ENCODE measurements at regions of chr9 and their contacts with region 1.

Region 1: GRCh38 chr9:136728080-136728547 is 14.6 kb downstream of the LCN10 start:
- DNase-seq: peak; percentile 89
- H3K4me3 Mint-ChIP-seq: peak overlapping the region; percentile 57
- H3K27ac Mint-ChIP-seq: no peak overlapping the region
- H3K4me1 Mint-ChIP-seq: peaks cover 25% of the 10 kb centered on the region
- H3K27me3 Mint-ChIP-seq: peaks cover 4% of the 10 kb centered on the region

Region 2: DNA sequence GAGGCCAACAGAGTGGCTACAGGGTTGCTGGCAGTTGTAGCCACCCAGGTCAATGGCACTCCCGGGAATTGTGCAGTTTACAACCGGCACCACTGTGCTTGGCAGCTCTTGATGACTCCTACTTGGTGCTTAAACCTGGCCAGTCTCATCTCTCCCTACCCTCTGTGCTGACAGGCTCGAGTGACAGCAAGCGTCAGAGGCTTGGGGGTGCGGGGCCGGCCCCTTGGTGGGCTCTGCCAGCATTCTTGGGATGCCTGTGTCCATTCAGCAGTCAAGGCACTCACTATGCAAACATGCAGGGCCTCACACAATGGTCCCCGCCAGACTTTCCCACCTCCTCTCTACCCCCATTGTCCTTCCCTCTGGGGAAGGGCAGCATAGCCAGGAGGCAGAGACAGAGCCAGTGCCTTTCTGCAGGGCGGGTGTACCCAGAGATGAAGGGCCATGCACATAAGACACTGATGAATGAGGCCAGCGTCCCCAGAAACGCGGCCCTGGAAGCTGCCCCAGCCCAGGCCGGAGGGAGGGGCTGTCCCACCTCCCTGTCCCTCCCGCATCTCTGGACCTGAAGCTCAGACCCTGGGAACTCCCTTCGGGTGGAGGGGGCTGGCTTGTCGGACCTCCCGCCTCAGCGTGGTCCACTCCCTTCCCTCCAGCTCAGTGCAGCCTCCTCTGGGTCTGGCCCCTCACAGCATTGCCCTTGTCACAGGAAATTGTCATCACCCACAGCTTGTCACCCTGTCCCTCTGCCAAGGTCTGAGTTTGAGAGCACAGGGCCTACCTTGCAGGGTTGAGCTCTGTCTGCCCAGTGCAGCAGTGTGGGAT is 155.9 kb before region 1 on chr9:
- intact Hi-C with region 1: no loop called
- DNase-seq: no peak
- H3K4me3 Mint-ChIP-seq: no peak overlapping the region
- H3K27ac Mint-ChIP-seq: no peak overlapping the region
- H3K4me1 Mint-ChIP-seq: no peaks in the 10 kb centered on the region
- H3K27me3 Mint-ChIP-seq: peaks cover 2% of the 10 kb centered on the region

Region 3: GRCh38 chr9:136686794-136687711 is 41.1 kb before region 1 on chr9 and contains the start of gene AGPAT2:
- intact Hi-C with region 1: loop called (anchors 2 kb)
- DNase-seq: peak; percentile 40
- H3K4me3 Mint-ChIP-seq: peak within 1 kb of the TSS; percentile 80
- H3K27ac Mint-ChIP-seq: no peak within 1 kb of the TSS
- H3K4me1 Mint-ChIP-seq: no peaks in the 10 kb centered on the region
- H3K27me3 Mint-ChIP-seq: peaks cover 3% of the 10 kb centered on the region
- total RNA-seq, gene AGPAT2: 24.7 and 25.0 TPM in 2 replicates

Region 4: GRCh38 chr9:136700959-136701667 is 27.0 kb before region 1 on chr9:
- intact Hi-C with region 1: loop called (anchors 1 kb)
- DNase-seq: peak; percentile 54
- H3K4me3 Mint-ChIP-seq: peak overlapping the region; percentile 77
- H3K27ac Mint-ChIP-seq: peak overlapping the region; percentile 95
- H3K4me1 Mint-ChIP-seq: peaks cover 20% of the 10 kb centered on the region
- H3K27me3 Mint-ChIP-seq: peaks cover 36% of the 10 kb centered on the region

Measured in activated T-helper 1 cell treated with anti-CD3 and anti-CD28 coated beads, Interleukin-12 subunit alpha, Interleukin-12 subunit beta, Interleukin-2, Interleukin-4 antibody, amounts not matched to agents 30 ng/mL and 10 ng/mL and 1 ng/mL, durations not matched to agents 14 hours and 24 hours and 36 hours (primary cell).